ENCODE measurements at regions of chr11 and their contacts with region 1.

Region 1: DNA sequence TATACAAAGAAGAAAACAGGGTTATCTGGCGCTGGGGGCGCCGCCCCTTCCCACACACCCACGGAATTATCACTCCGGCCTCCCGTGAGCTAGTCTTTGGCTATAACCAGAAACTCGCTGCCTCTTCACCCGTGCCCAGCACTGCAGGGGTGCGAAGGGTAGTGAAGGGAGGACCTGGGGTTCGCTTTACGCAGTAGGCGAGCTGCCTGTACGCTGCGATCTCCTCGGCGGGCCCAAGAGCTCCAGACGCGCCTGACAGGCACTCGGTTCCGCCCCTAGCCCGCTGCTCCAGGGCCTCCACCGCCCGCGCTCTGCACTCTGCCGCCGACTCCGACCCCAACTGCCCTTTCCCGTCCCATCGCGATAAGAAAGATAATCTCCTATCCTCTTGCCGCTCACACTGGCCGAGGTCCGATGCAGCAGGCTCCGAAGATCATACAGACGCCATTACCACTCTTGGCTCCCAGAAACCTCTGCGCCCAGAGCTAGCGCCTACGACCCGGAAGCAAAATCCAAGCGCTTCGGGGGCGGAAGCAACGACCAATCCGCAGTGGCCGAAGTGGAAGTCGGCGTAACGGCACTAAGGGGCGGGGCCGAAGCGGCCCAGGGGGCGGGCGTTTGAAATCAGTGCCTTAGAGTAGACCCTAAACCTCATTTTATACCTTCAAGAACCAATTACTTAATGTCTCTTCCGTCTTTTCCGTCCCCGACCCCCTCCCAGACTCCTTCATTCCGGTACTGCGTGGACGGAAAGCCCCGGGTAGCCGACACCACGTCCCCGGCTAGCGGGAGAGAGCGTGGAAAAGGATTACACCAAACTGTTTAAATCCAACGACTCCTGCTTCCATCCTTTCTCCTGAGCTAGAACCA is at the starts of genes CWC15 and KDM4D:
- DNase-seq: peak; percentile 90 to 97 (median 95)
- ATAC-seq: peak; percentile 98
- H3K4me3 ChIP-seq: peak within 1 kb of the TSS; percentile 70 to 90
- H3K4me3 Mint-ChIP-seq: peak within 1 kb of the TSS; percentile 99
- H3K27ac ChIP-seq: peak within 1 kb of the TSS; percentile 72 to 83
- H3K27ac Mint-ChIP-seq: peak within 1 kb of the TSS; percentile 99
- H3K4me1 ChIP-seq: peaks cover 14% of the 10 kb centered on the region
- H3K4me1 Mint-ChIP-seq: peaks cover 34% of the 10 kb centered on the region
- H3K27me3 ChIP-seq: no peaks in the 10 kb centered on the region
- H3K27me3 Mint-ChIP-seq: no peaks in the 10 kb centered on the region
- CTCF ChIP-seq: no peak
- total RNA-seq, gene CWC15: 127 to 129 TPM
- total RNA-seq, gene KDM4D: 0.14 TPM in 1 of 2 experiments, not detected in the other

Region 2: GRCh38 chr11:93209466-93209865 is 1763.9 kb before region 1 on chr11:
- CTCF ChIA-PET with region 1: no interaction called
- POLR2A ChIA-PET with region 1: no interaction called
- intact Hi-C with region 1: loop called in 1 of 2 experiments (anchors 10 kb)
- DNase-seq: no peak
- ATAC-seq: no peak
- H3K4me3 ChIP-seq: no peak overlapping the region
- H3K4me3 Mint-ChIP-seq: no peak overlapping the region
- H3K27ac ChIP-seq: no peak overlapping the region
- H3K27ac Mint-ChIP-seq: no peak overlapping the region
- H3K4me1 ChIP-seq: no peaks in the 10 kb centered on the region
- H3K4me1 Mint-ChIP-seq: no peaks in the 10 kb centered on the region
- H3K27me3 ChIP-seq: no peaks in the 10 kb centered on the region
- H3K27me3 Mint-ChIP-seq: peaks cover 11% of the 10 kb centered on the region
- CTCF ChIP-seq: no peak

Region 3: DNA sequence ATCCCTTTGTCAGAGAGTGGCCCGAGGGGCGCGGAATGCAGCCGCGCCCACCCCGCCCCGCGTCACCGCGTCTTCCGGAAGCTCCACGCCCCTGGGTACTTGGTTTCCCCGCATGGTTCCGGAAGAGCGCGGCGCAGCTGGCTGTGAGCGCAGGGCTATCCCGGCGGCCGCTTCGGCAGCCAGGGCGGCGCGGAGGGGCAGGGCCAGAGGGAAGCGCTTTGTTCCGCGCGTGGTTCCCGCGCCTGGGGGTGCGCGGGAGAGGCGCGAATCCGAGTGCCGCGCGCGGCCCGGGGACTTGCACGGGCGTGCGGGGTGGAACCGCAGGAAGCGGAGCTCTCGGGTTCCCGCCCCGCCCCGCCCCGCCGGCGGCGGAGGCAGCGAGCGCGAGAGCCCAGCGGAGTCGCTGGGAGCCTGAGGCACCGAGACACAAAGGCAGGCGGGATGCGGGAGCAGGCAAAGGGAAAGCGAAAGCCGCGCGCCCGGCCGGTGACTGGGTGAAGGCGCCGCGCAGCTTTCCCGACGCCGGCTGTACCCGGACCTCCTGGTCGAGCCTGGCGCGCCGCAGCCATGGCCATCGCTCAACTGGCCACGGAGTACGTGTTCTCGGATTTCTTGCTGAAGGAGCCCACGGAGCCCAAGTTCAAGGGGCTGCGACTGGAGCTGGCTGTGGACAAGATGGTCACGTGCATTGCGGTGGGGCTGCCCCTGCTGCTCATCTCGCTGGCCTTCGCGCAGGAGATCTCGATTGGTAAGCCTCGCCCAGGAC is 844.4 kb before region 1 on chr11 and contains the start of gene PANX1:
- CTCF ChIA-PET with region 1: no interaction called
- POLR2A ChIA-PET with region 1: no interaction called
- intact Hi-C with region 1: loop called (anchors 5 kb)
- DNase-seq: peak; percentile 41 to 94 (median 75)
- ATAC-seq: peak; percentile 83
- H3K4me3 ChIP-seq: peak within 1 kb of the TSS; percentile 91 to 95
- H3K4me3 Mint-ChIP-seq: no peak within 1 kb of the TSS
- H3K27ac ChIP-seq: peak within 1 kb of the TSS; percentile 85 to 95
- H3K27ac Mint-ChIP-seq: peak within 1 kb of the TSS; percentile 92
- H3K4me1 ChIP-seq: peaks cover 34% of the 10 kb centered on the region
- H3K4me1 Mint-ChIP-seq: peaks cover 26% of the 10 kb centered on the region
- H3K27me3 ChIP-seq: no peaks in the 10 kb centered on the region
- H3K27me3 Mint-ChIP-seq: no peaks in the 10 kb centered on the region
- CTCF ChIP-seq: no peak
- total RNA-seq, gene PANX1: 8.3 to 9.3 TPM

Region 4: DNA sequence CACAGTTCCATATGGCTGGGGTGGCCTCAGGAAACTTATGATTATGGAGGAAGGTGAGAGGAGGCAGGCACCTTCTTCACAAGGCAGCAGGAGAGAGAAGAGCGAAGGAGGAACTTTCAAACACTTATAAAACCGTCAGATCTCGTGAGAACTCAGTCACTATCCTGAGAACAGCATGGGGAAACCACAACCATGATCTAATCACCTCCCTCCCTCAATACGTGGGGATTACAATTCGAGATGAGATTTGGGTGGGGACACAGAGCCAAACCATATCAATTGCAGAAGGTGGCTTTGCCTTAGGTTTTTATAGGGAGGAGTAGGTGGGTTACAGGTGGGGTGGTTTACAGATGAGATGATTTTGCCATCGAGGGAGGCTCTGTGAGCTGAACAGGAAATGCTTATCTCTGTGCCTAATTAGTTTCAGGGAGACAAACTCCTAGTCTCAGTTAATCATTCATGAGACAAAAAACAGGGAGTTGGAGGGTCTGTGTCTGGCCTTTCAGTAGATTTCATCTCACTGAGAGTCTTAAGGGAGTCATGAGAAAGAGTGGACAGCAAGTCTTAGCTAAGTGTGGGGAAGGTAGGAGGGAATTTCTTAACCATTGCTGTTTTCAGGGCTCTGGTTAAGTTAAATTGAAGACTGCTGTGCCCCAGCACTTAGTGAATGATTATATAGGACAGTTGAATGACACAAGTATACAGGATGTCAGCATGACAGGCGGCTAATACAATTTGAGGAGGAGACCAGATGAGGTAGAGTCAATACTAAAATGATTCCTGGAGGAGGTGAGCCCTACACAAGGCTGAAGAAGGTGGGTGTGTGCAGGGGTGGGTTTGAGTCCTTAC is 47.7 kb before region 1 on chr11:
- CTCF ChIA-PET with region 1: interaction called, 7 read pairs
- POLR2A ChIA-PET with region 1: interaction called, 9 read pairs
- intact Hi-C with region 1: loop called in 1 of 2 experiments (anchors 2 kb)
- DNase-seq: peak in 1 of 9 experiments; percentile 27
- ATAC-seq: peak; percentile 21
- H3K4me3 ChIP-seq: no peak overlapping the region
- H3K4me3 Mint-ChIP-seq: peak overlapping the region; percentile 13
- H3K27ac ChIP-seq: peak overlapping the region in 1 of 2 experiments; percentile 33
- H3K27ac Mint-ChIP-seq: peak overlapping the region; percentile 94
- H3K4me1 ChIP-seq: peaks cover 37% of the 10 kb centered on the region
- H3K4me1 Mint-ChIP-seq: peaks cover 51% of the 10 kb centered on the region
- H3K27me3 ChIP-seq: no peaks in the 10 kb centered on the region
- H3K27me3 Mint-ChIP-seq: peaks cover 2% of the 10 kb centered on the region
- CTCF ChIP-seq: no peak

Region 5: GRCh38 chr11:94997437-94997836 is 24.1 kb after region 1 on chr11:
- CTCF ChIA-PET with region 1: no interaction called
- POLR2A ChIA-PET with region 1: no interaction called
- intact Hi-C with region 1: no loop called
- DNase-seq: no peak
- ATAC-seq: no peak
- H3K4me3 ChIP-seq: no peak overlapping the region
- H3K4me3 Mint-ChIP-seq: no peak overlapping the region
- H3K27ac ChIP-seq: no peak overlapping the region
- H3K27ac Mint-ChIP-seq: no peak overlapping the region
- H3K4me1 ChIP-seq: no peaks in the 10 kb centered on the region
- H3K4me1 Mint-ChIP-seq: no peaks in the 10 kb centered on the region
- H3K27me3 ChIP-seq: no peaks in the 10 kb centered on the region
- H3K27me3 Mint-ChIP-seq: peaks cover 2% of the 10 kb centered on the region
- CTCF ChIP-seq: no peak

Region 6: GRCh38 chr11:95150946-95151684 is 177.8 kb after region 1 on chr11:
- CTCF ChIA-PET with region 1: interaction called, 3 read pairs
- POLR2A ChIA-PET with region 1: interaction called, 4 read pairs
- intact Hi-C with region 1: loop called (anchors 2 kb)
- DNase-seq: peak; percentile 83 to 96 (median 91)
- ATAC-seq: peak; percentile 94
- H3K4me3 ChIP-seq: peak overlapping the region; percentile 64 to 82
- H3K4me3 Mint-ChIP-seq: peak overlapping the region; percentile 85
- H3K27ac ChIP-seq: peak overlapping the region; percentile 66 to 69
- H3K27ac Mint-ChIP-seq: peak overlapping the region; percentile 91
- H3K4me1 ChIP-seq: peaks cover 24% of the 10 kb centered on the region
- H3K4me1 Mint-ChIP-seq: peaks cover 35% of the 10 kb centered on the region
- H3K27me3 ChIP-seq: no peaks in the 10 kb centered on the region
- H3K27me3 Mint-ChIP-seq: peaks cover 4% of the 10 kb centered on the region
- CTCF ChIP-seq: peak; percentile 92

Region 7: GRCh38 chr11:95625164-95625900 is 652.0 kb after region 1 on chr11:
- CTCF ChIA-PET with region 1: no interaction called
- POLR2A ChIA-PET with region 1: no interaction called
- intact Hi-C with region 1: no loop called
- DNase-seq: no peak
- ATAC-seq: no peak
- H3K4me3 ChIP-seq: no peak overlapping the region
- H3K4me3 Mint-ChIP-seq: peak overlapping the region; percentile 1
- H3K27ac ChIP-seq: no peak overlapping the region
- H3K27ac Mint-ChIP-seq: peak overlapping the region; percentile 49
- H3K4me1 ChIP-seq: no peaks in the 10 kb centered on the region
- H3K4me1 Mint-ChIP-seq: peaks cover 2% of the 10 kb centered on the region
- H3K27me3 ChIP-seq: no peaks in the 10 kb centered on the region
- H3K27me3 Mint-ChIP-seq: no peaks in the 10 kb centered on the region
- CTCF ChIP-seq: no peak

Region 8: GRCh38 chr11:96389720-96390487 is 1416.6 kb after region 1 on chr11 and contains the starts of genes CCDC82 and JRKL:
- CTCF ChIA-PET with region 1: no interaction called
- POLR2A ChIA-PET with region 1: no interaction called
- intact Hi-C with region 1: loop called (anchors 1 to 5 kb)
- DNase-seq: peak; percentile 96 to 99 (median 98)
- ATAC-seq: peak; percentile 97
- H3K4me3 ChIP-seq: peak within 1 kb of the TSS; percentile 87 to 93
- H3K4me3 Mint-ChIP-seq: peak within 1 kb of the TSS; percentile 94
- H3K27ac ChIP-seq: peak within 1 kb of the TSS; percentile 78 to 79
- H3K27ac Mint-ChIP-seq: peak within 1 kb of the TSS; percentile 96
- H3K4me1 ChIP-seq: peaks cover 15% of the 10 kb centered on the region
- H3K4me1 Mint-ChIP-seq: peaks cover 52% of the 10 kb centered on the region
- H3K27me3 ChIP-seq: no peaks in the 10 kb centered on the region
- H3K27me3 Mint-ChIP-seq: no peaks in the 10 kb centered on the region
- CTCF ChIP-seq: no peak
- total RNA-seq, gene CCDC82: 20.0 to 23.0 TPM
- total RNA-seq, gene JRKL: 2.5 to 2.6 TPM